GM10248 (cell line): ENCODE measurements at regions of chr2 and their contacts with region 1.

Region 1: DNA sequence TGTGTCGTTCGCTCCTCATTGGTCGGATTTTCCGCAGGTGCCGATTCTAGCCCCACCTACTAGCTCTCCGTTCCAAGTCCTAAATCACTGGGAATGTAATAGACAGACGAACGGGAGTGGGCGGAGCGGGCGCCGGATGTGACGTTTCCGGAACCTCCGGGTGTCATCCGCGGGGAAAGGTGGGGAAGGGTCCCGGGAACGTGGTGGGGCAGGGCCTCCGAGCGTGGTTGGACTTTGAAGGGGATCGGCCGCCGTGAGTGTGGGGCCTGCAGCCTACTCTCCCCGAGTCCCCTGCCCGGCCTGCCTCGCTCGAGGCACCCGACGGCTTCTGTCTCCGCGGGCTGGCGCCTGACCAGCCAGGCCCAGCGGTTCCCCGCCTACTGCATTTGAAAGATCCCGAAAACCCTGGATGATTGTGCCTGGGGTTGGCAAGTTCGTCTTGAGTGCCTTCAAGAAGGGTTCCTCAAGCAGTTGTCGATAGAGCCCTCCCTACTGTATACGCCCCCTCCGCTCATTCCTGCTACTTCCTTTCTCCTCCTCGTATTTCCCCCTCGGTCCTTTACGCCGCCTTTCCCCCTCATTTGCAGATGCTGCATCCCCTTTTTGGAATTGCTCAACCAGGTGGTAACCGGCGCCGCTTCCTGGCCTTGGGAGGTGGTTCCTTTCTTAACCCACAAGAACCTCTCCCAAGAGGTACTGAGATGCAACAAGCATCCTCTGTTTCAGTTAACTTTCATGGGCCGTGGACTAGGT is at the start of gene STAMBP:
- DNase-seq: peak; percentile 94
- CTCF ChIP-seq: no peak

Region 2: GRCh38 chr2:73404409-73404808 is 424.6 kb before region 1 on chr2:
- CTCF ChIA-PET with region 1: no interaction called
- POLR2A ChIA-PET with region 1: no interaction called
- DNase-seq: no peak
- CTCF ChIP-seq: no peak

Region 3: DNA sequence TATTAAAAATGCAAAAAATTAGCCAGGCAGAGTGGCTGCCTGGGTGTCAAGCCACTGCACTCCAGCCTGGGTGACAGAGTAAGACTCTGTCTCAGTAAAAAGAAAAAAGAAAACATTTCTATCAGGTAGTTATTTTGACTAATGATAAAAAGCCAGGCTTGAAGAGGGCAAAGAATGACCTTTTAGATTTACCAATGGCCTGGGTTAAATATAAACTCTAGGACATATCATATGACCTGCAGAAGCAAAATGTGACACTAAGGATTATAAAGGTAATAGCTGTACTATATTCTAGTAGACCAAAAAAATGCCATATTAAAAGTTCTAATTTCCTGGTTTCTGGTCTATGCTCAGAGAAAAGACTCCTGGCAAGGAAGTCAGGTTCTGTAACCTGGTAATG is 16.4 kb before region 1 on chr2:
- CTCF ChIA-PET with region 1: interaction called, 15 read pairs
- POLR2A ChIA-PET with region 1: interaction called, 3 read pairs
- DNase-seq: no peak
- CTCF ChIP-seq: no peak

Region 4: DNA sequence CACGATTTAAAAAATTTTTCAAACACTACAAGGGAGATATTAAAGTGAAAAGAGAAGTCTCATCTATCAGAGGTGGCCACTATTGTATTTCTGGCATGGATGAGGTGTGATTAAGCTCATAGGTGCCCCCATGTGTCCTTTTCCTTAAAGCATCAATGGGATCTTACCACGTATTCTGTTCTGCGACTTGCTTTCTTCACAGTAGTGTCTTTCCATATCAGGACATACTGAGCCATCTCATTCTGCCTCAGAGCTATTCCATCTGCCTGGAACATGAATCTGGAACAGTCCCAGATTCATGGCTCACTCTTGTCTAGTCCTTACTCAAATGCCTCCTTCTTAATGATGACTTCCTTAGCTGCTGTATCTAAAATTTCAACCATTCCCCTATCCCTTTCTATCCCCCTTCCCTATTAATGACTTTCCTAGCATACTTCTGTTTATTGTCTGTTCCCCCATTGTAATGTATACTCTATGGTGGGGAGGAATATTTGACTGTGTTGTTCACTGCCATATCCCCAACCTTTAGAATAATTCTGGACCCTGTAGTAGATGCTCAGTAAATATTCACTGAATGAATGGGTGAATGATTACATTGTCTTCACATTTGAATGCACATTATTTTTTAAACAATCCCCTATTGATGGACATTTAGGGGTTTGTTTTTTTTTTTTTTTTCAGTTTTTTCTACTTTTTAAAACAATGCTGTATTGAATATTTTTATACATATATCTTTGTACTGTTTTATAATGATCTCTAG is 10.8 kb after region 1 on chr2:
- CTCF ChIA-PET with region 1: interaction called, 20 read pairs
- POLR2A ChIA-PET with region 1: interaction called, 3 read pairs
- DNase-seq: no peak
- CTCF ChIP-seq: no peak

Region 5: GRCh38 chr2:73963385-73964120 is 134.6 kb after region 1 on chr2:
- CTCF ChIA-PET with region 1: no interaction called
- POLR2A ChIA-PET with region 1: no interaction called
- DNase-seq: peak; percentile 55
- CTCF ChIP-seq: no peak

Region 6: DNA sequence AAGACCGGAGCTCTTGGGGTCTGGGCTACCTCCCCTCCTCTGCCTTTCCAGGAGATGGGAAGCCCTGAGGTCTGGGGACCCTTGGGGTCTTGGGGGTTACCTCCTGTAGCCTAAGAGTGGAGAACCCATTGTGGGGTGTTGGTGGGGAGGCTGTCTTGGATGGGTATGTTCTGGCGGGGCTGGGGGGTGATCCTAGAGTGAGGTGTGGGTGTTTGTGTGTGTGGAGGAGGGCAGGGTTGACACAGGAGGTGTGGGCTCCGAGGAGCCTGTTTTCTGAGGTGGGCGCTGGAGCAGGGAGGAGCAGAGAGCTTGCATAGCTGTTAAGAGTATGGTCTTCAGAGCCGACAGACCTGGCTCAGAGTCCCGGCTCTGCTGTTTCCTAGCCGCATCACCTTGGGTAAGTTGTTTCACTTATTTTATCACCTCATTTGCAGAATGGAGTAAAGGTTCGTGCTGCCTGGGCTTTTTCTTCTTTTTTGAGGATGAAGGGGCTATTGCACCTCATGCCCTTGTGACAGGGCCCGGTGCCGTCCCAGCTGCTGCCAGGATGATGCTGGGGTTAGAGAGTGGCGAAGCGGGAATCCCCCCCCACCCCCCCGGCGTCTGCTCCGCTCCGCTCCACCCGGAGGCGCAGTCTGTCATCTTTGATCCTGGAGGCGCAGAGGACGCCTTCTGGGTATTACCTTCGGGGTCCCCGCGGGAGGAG is 172.9 kb after region 1 on chr2:
- CTCF ChIA-PET with region 1: interaction called, 10 read pairs
- POLR2A ChIA-PET with region 1: no interaction called
- DNase-seq: no peak
- CTCF ChIP-seq: no peak

Region 7: GRCh38 chr2:74147727-74148456 is 318.9 kb after region 1 on chr2 and contains the start of gene BOLA3:
- CTCF ChIA-PET with region 1: interaction called, 177 read pairs
- POLR2A ChIA-PET with region 1: interaction called, 3 read pairs
- DNase-seq: peak; percentile 97
- CTCF ChIP-seq: peak; percentile 81

Region 8: DNA sequence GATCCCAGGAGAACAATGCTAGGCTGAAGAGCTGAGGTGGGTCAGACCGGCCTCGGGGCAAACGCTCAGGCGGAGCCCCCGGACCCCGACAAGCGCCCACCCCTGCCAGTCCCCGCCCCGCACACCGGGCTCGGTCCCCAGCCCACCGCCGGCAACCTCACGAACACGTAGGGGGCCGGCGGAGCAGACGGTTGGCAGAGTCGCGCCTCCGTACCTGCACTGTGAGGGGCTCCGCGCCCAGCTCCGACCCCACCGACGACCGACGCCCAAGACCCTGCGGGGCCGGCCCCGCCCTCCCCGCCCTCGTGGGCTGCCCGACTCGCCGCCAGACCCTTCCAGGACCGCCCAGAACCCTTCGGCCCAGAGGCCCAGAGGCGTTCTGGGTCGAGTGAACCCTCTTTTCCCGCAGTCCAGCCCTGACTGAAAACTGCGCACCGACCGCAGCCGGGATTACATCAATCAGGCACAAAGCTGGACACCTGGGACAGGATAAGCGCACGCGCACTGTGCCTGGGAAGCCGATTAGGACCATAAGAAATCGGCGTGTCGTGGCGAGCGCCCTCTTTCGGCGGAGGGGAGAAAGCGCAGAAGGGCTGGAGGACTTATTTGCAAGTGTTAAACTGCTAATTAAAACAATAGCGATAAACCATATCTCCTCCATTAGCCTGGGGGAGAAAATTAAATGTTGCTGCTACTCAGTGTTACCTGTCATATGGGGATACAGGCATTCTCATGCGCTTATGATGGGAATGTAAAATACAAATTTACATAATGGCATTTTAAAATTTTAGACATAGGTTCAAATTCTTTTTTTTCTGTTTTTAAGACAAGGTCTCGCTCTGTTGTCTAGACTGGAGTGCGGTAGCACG is 562.8 kb after region 1 on chr2:
- CTCF ChIA-PET with region 1: interaction called, 10 read pairs
- POLR2A ChIA-PET with region 1: no interaction called
- DNase-seq: peak; percentile 94
- CTCF ChIP-seq: peak; percentile 95